T-cell (primary cell): ENCODE measurements at regions of chr3 and their contacts with region 1.

Region 1: DNA sequence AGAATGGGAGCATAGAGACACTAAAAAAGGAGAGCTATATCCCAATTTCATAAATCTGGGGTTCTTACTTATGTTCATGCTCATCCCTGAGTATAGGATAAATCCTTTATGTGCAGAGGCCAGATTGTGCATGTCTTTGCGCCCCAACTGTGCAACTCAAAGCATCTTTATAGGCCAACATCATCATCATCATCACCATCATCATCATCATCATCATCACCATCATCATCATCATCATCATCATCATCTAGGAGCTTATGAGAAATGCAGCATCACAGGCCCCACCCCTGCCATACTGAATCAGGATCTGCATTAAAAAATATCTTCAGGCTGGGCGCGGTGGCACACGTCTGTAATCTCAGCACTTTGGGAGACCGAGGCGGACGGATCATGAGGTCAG is 45.5 kb downstream of the DPPA2 start:
- DNase-seq: no peak
- ATAC-seq: no peak
- H3K4me3 ChIP-seq: no peak overlapping the region
- H3K4me3 Mint-ChIP-seq: no peak overlapping the region
- H3K27ac ChIP-seq: no peak overlapping the region
- H3K27ac Mint-ChIP-seq: no peak overlapping the region
- H3K4me1 ChIP-seq: no peaks in the 10 kb centered on the region
- H3K4me1 Mint-ChIP-seq: peaks cover 0 to 2% (median 0%) of the 10 kb centered on the region in 3 donors
- H3K27me3 ChIP-seq: no peaks in the 10 kb centered on the region
- H3K27me3 Mint-ChIP-seq: peaks cover 0 to 2% of the 10 kb centered on the region in 2 donors

Region 2: GRCh38 chr3:109258010-109258409 is 12.8 kb before region 1 on chr3:
- CTCF ChIA-PET with region 1: no interaction called
- POLR2A ChIA-PET with region 1: interaction called in 1 of 2 experiments, 11 read pairs
- DNase-seq: no peak
- ATAC-seq: no peak
- H3K4me3 ChIP-seq: no peak overlapping the region
- H3K4me3 Mint-ChIP-seq: no peak overlapping the region
- H3K27ac ChIP-seq: no peak overlapping the region
- H3K27ac Mint-ChIP-seq: no peak overlapping the region
- H3K4me1 ChIP-seq: no peaks in the 10 kb centered on the region
- H3K4me1 Mint-ChIP-seq: no peaks in the 10 kb centered on the region
- H3K27me3 ChIP-seq: no peaks in the 10 kb centered on the region
- H3K27me3 Mint-ChIP-seq: peaks cover 0 to 3% of the 10 kb centered on the region in 2 donors

Region 3: DNA sequence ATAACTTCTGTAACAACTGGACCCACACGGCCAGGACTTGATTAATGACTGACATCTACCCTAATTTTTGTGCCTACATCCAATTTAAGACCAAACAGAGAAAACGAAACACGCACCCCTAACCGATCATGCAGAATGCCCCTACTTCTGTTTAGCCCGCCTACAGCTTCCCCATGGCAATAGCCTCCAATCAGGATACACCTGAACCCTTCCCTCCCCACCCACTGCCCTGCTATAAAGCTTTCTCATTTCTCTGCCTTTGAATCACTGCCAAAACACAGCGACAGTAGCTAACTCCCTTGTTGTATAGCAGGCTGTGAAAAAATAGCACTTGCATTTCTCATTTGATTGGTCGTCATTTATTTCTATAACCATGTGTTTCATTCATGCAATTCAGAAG is 111.8 kb after region 1 on chr3:
- CTCF ChIA-PET with region 1: no interaction called
- POLR2A ChIA-PET with region 1: no interaction called
- DNase-seq: no peak
- ATAC-seq: no peak
- H3K4me3 ChIP-seq: no peak overlapping the region
- H3K4me3 Mint-ChIP-seq: no peak overlapping the region
- H3K27ac ChIP-seq: no peak overlapping the region
- H3K27ac Mint-ChIP-seq: no peak overlapping the region
- H3K4me1 ChIP-seq: peaks cover 0 to 2% of the 10 kb centered on the region in 2 experiments
- H3K4me1 Mint-ChIP-seq: no peaks in the 10 kb centered on the region
- H3K27me3 ChIP-seq: no peaks in the 10 kb centered on the region
- H3K27me3 Mint-ChIP-seq: peaks cover 0 to 2% of the 10 kb centered on the region in 2 donors

Region 4: GRCh38 chr3:109685084-109686079 is 414.6 kb after region 1 on chr3:
- CTCF ChIA-PET with region 1: no interaction called
- POLR2A ChIA-PET with region 1: no interaction called
- DNase-seq: no peak
- ATAC-seq: no peak
- H3K4me3 ChIP-seq: no peak overlapping the region
- H3K4me3 Mint-ChIP-seq: no peak overlapping the region
- H3K27ac ChIP-seq: no peak overlapping the region
- H3K27ac Mint-ChIP-seq: no peak overlapping the region
- H3K4me1 ChIP-seq: no peaks in the 10 kb centered on the region
- H3K4me1 Mint-ChIP-seq: no peaks in the 10 kb centered on the region
- H3K27me3 ChIP-seq: no peaks in the 10 kb centered on the region
- H3K27me3 Mint-ChIP-seq: no peaks in the 10 kb centered on the region